ENCODE measurements at regions of chr17 and their contacts with region 1.

Region 1: DNA sequence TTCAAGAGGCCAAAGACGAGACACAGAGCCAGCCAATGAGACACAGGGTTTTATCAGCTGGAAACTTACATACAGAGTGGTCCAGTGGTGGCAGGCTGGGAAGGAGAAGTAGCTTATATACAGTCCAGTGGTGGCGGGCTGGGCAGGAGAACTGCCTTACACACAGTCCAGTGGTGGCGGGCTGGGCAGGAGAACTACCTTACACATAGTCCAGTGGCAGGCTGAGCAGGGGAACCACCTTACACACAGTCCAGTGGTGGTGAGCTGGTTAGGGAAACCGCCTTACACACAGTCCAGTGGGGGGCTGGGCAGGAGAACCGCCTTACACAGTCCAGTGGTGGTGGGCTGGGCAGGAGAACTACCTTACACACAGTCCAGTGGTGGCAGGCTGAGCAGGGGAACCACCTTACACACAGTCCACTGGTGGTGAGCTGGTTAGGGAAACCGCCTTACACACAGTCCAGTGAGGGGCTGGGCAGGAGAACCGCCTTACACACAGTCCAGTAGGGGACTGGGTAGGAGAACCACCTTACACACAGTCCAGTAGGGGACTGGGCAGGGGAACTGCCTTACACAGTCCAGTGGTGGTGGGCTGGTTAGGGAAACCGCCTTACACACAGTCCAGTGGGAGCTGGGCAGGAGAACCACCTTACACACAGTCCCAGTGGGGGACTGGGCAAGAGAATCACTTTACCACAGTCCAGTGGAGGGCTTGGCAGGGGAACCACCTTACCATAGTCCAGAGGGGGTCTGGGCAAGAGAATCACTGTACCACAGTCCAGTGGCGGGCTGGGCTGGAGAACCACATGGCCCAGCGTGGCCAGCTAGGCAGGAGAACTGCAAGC is 90.9 kb downstream of the GAS7 start:
- DNase-seq: no peak
- ATAC-seq: no peak
- H3K4me3 ChIP-seq: no peak overlapping the region
- H3K27ac ChIP-seq: no peak overlapping the region
- H3K4me1 ChIP-seq: no peaks in the 10 kb centered on the region
- H3K27me3 ChIP-seq: peaks cover 0 to 12% of the 10 kb centered on the region in 2 experiments; a peak in 3 of 5 replicates
- CTCF ChIP-seq: no peak
- EP300 ChIP-seq: no peak
- POLR2A ChIP-seq: no peak
- RAD21 ChIP-seq: no peak

Region 2: GRCh38 chr17:10036511-10037061 is 71.0 kb before region 1 on chr17:
- CTCF ChIA-PET with region 1: no interaction called
- POLR2A ChIA-PET with region 1: no interaction called
- in situ Hi-C with region 1: no loop called
- intact Hi-C with region 1: no loop called
- DNase-seq: peak; percentile 52
- ATAC-seq: peak; percentile 76
- H3K4me3 ChIP-seq: no peak overlapping the region; a peak in 2 of 6 replicates
- H3K27ac ChIP-seq: no peak overlapping the region
- H3K4me1 ChIP-seq: peaks cover 20% of the 10 kb centered on the region
- H3K27me3 ChIP-seq: peaks cover 3 to 37% of the 10 kb centered on the region in 2 experiments; a peak in 3 of 5 replicates
- CTCF ChIP-seq: no peak
- EP300 ChIP-seq: no peak
- POLR2A ChIP-seq: no peak
- RAD21 ChIP-seq: no peak

Region 3: DNA sequence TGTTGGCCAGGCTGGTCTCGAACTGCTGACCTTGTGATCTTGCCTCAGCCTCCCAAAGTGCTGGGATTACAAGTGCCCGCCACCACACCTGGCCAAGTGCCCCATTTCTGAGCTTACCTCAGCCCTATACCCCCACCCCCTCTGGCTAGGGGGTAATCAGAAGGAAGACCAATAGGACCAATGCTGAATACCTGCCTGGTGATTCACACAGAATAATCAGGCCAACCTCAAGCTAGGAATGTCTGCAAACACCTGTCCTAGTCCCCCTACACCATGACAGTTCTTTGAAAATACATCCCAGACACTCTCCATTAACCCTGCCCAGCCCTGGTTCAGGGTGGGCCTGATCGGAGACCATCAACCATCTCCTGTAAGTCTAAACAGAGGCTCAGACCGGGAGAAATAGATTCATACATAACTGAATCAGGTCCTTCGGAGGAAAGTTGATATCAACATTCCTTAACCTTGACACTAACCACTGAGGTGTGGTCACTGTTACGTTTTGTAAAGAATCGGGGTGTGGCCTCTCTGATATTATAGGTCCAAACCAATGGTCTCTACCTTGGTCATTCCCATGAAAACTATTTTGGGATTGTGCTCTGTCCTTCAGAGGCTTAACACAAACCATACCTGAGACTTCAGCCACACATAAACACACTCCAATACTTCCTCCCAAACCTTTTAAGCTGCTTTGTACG is 40.0 kb before region 1 on chr17:
- CTCF ChIA-PET with region 1: no interaction called
- POLR2A ChIA-PET with region 1: no interaction called
- in situ Hi-C with region 1: no loop called
- intact Hi-C with region 1: loop called (anchors 2 kb)
- DNase-seq: no peak
- ATAC-seq: no peak
- H3K4me3 ChIP-seq: no peak overlapping the region
- H3K27ac ChIP-seq: no peak overlapping the region
- H3K4me1 ChIP-seq: no peaks in the 10 kb centered on the region
- H3K27me3 ChIP-seq: peaks cover 0 to 20% of the 10 kb centered on the region in 2 experiments; a peak in 2 of 5 replicates
- CTCF ChIP-seq: no peak
- EP300 ChIP-seq: no peak
- POLR2A ChIP-seq: no peak
- RAD21 ChIP-seq: no peak

Measured in HepG2 (cell line).